MCF 10A (cell line): ENCODE measurements at regions of chr2 and their contacts with region 1.

Region 1: DNA sequence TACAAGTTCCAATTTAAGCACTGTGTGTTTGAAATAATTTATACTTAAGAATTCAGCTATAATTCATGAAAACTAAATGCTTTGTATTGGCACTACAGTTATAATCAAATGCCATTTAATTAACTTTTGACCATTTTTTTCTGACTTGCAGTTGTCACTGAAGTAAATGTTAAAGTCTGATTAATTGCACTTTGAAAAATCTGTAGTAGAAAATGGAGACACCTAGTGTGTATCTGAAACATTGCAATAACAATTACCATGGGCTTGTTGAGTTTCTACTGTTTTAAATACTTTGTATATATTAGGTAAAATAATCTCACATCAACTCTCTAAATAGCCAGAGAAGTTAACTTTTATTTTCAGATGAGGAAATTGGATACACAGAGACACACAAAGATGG is 458.6 kb upstream of the FSIP2 start:
- DNase-seq: peak; percentile 30
- H3K4me3 Mint-ChIP-seq: no peak overlapping the region
- H3K27ac Mint-ChIP-seq: no peak overlapping the region
- H3K4me1 Mint-ChIP-seq: no peaks in the 10 kb centered on the region
- H3K27me3 Mint-ChIP-seq: no peaks in the 10 kb centered on the region
- CTCF ChIP-seq: peak; percentile 55

Region 2: GRCh38 chr2:184611361-184612085 is 668.5 kb before region 1 on chr2:
- CTCF ChIA-PET with region 1: interaction called, 11 read pairs
- POLR2A ChIA-PET with region 1: no interaction called
- intact Hi-C with region 1: loop called (anchors 1 kb)
- DNase-seq: peak; percentile 26
- H3K4me3 Mint-ChIP-seq: no peak overlapping the region
- H3K27ac Mint-ChIP-seq: no peak overlapping the region
- H3K4me1 Mint-ChIP-seq: no peaks in the 10 kb centered on the region
- H3K27me3 Mint-ChIP-seq: no peaks in the 10 kb centered on the region
- CTCF ChIP-seq: peak; percentile 41

Region 3: GRCh38 chr2:184646177-184646576 is 633.8 kb before region 1 on chr2:
- CTCF ChIA-PET with region 1: interaction called, 3 read pairs
- POLR2A ChIA-PET with region 1: no interaction called
- intact Hi-C with region 1: loop called (anchors 10 kb)
- DNase-seq: peak; percentile 49
- H3K4me3 Mint-ChIP-seq: no peak overlapping the region
- H3K27ac Mint-ChIP-seq: peak overlapping the region; percentile 61
- H3K4me1 Mint-ChIP-seq: peaks cover 10% of the 10 kb centered on the region
- H3K27me3 Mint-ChIP-seq: no peaks in the 10 kb centered on the region
- CTCF ChIP-seq: no peak

Region 4: GRCh38 chr2:185208261-185208660 is 71.7 kb before region 1 on chr2:
- CTCF ChIA-PET with region 1: interaction called, 4 read pairs
- POLR2A ChIA-PET with region 1: no interaction called
- intact Hi-C with region 1: loop called (anchors 5 kb)
- DNase-seq: peak; percentile 73
- H3K4me3 Mint-ChIP-seq: no peak overlapping the region
- H3K27ac Mint-ChIP-seq: no peak overlapping the region
- H3K4me1 Mint-ChIP-seq: no peaks in the 10 kb centered on the region
- H3K27me3 Mint-ChIP-seq: no peaks in the 10 kb centered on the region
- CTCF ChIP-seq: peak; percentile 50